ENCODE measurements at regions of chr3 and their contacts with region 1.

Region 1: GRCh38 chr3:98522244-98523090 is at the start of gene CLDND1:
- DNase-seq: peak; percentile 90 to 97 (median 94)
- ATAC-seq: peak; percentile 96
- H3K4me3 ChIP-seq: peak within 1 kb of the TSS; percentile 68
- H3K4me3 Mint-ChIP-seq: peak within 1 kb of the TSS; percentile 95
- H3K27ac ChIP-seq: peak within 1 kb of the TSS; percentile 66 to 84
- H3K27ac Mint-ChIP-seq: peak within 1 kb of the TSS; percentile 79
- H3K4me1 ChIP-seq: peaks cover 23% of the 10 kb centered on the region
- H3K4me1 Mint-ChIP-seq: peaks cover 55% of the 10 kb centered on the region
- H3K27me3 ChIP-seq: no peaks in the 10 kb centered on the region
- H3K27me3 Mint-ChIP-seq: no peaks in the 10 kb centered on the region
- CTCF ChIP-seq: no peak
- total RNA-seq, gene CLDND1: 168 to 185 TPM

Region 2: GRCh38 chr3:97971677-97972567 is 550.5 kb before region 1 on chr3 and contains the start of gene RIOX2:
- CTCF ChIA-PET with region 1: no interaction called
- POLR2A ChIA-PET with region 1: no interaction called
- intact Hi-C with region 1: loop called in 1 of 2 experiments (anchors 10 kb)
- DNase-seq: peak; percentile 52 to 91 (median 72)
- ATAC-seq: peak; percentile 93
- H3K4me3 ChIP-seq: peak within 1 kb of the TSS; percentile 63
- H3K4me3 Mint-ChIP-seq: peak within 1 kb of the TSS; percentile 91
- H3K27ac ChIP-seq: peak within 1 kb of the TSS in 1 of 2 donors; percentile 37
- H3K27ac Mint-ChIP-seq: peak within 1 kb of the TSS; percentile 91
- H3K4me1 ChIP-seq: peaks cover 34% of the 10 kb centered on the region
- H3K4me1 Mint-ChIP-seq: peaks cover 72% of the 10 kb centered on the region
- H3K27me3 ChIP-seq: no peaks in the 10 kb centered on the region
- H3K27me3 Mint-ChIP-seq: no peaks in the 10 kb centered on the region
- CTCF ChIP-seq: no peak
- total RNA-seq, gene RIOX2: 13.1 to 13.5 TPM

Region 3: DNA sequence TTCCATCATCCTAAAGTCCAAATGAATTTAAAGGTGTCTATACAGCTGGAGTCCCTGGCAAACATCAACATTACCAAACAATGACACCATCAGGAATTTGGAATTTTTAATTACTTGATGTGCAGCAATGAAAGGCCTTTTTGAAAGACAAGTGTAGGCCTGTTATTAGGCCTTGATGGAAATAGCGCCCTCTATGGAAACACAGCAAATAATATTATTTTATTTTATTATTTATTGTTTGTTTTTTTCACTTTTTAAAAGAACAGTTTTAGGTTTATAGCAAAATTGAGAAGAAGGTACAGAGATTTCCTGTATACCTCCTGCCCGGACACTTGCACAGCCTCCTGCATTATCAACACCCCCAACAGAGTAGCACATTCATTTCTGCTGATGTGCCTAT is 453.6 kb before region 1 on chr3:
- CTCF ChIA-PET with region 1: no interaction called
- POLR2A ChIA-PET with region 1: no interaction called
- intact Hi-C with region 1: no loop called
- DNase-seq: no peak
- ATAC-seq: no peak
- H3K4me3 ChIP-seq: no peak overlapping the region
- H3K4me3 Mint-ChIP-seq: no peak overlapping the region
- H3K27ac ChIP-seq: no peak overlapping the region
- H3K27ac Mint-ChIP-seq: no peak overlapping the region
- H3K4me1 ChIP-seq: no peaks in the 10 kb centered on the region
- H3K4me1 Mint-ChIP-seq: no peaks in the 10 kb centered on the region
- H3K27me3 ChIP-seq: peaks cover 0 to 4% of the 10 kb centered on the region in 2 experiments
- H3K27me3 Mint-ChIP-seq: peaks cover 25% of the 10 kb centered on the region
- CTCF ChIP-seq: no peak

Region 4: DNA sequence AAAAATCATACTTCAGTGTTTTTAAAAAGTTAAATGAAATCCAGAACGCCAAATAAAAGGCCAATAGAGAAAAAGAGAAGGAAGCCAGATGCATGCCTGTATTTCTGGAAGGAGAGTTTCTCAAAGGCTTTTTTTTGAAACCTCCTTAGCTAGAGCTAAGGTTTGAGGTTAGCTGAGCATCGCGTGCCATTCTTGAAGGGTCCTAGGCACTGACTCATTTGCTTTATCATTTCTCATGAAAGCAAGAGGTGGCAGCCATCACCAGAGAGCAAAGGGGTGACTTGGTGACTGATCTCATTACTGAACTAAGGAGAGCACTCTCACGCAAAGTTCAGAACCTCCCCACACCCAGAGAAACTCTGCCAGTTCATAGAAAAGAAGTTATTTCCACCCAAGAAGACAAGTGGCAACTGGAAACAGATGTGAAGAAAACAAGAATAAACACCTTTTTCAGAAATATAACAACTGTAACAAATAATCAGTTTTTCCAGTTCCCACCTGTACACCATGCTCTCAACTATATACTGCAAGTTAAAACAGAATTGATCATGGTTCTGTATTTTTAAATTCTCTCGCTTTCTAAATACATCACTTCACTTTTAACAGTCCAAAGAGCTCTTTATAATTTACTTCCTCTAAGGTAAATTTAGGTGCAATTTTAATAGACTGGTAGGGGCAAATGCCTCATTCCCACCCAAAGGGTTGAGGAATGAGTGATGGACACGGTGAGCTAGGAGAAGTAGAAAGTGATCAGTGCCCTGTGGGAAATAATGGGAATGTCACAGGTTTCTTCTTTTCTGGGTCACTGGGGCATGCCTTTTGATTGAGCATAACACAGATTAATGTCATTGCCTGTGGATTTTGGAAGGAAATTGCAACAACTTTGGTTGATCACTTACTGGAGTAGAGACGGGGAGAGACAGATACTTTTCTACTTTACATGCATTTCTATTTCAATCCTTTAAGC is 34.0 kb after region 1 on chr3:
- CTCF ChIA-PET with region 1: interaction called, 3 read pairs
- POLR2A ChIA-PET with region 1: interaction called, 169 read pairs
- intact Hi-C with region 1: no loop called
- DNase-seq: peak in 13 of 14 experiments; percentile 29 to 93 (median 49)
- ATAC-seq: peak; percentile 84
- H3K4me3 ChIP-seq: peak overlapping the region; percentile 32
- H3K4me3 Mint-ChIP-seq: peak overlapping the region; percentile 65
- H3K27ac ChIP-seq: peak overlapping the region; percentile 54 to 61
- H3K27ac Mint-ChIP-seq: peak overlapping the region; percentile 92
- H3K4me1 ChIP-seq: peaks cover 37% of the 10 kb centered on the region
- H3K4me1 Mint-ChIP-seq: peaks cover 75% of the 10 kb centered on the region
- H3K27me3 ChIP-seq: no peaks in the 10 kb centered on the region
- H3K27me3 Mint-ChIP-seq: no peaks in the 10 kb centered on the region
- CTCF ChIP-seq: no peak

Region 5: DNA sequence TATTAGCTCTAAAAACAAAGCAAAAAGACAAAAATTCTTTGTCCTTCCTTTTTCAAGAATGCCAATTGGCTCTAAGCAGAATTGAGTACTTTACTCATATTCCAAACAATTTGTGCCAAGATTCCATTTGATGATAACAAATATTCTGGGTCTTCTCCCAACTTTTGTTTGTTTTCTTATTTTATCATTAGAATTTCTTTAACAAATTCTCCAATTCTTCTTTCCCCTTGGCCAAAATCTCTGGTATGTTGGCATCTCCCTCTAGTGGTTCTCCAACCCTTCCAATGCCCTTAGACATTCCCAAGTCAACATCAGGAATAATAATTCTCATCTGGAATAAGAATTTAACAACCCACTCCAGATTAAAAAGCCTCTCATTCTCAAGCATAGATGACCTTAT is 65.6 kb after region 1 on chr3:
- CTCF ChIA-PET with region 1: interaction called, 3 read pairs
- POLR2A ChIA-PET with region 1: interaction called, 67 read pairs
- intact Hi-C with region 1: loop called (anchors 2 kb)
- DNase-seq: no peak
- ATAC-seq: no peak
- H3K4me3 ChIP-seq: no peak overlapping the region
- H3K4me3 Mint-ChIP-seq: no peak overlapping the region
- H3K27ac ChIP-seq: no peak overlapping the region
- H3K27ac Mint-ChIP-seq: no peak overlapping the region
- H3K4me1 ChIP-seq: peaks cover 13% of the 10 kb centered on the region
- H3K4me1 Mint-ChIP-seq: peaks cover 37% of the 10 kb centered on the region
- H3K27me3 ChIP-seq: no peaks in the 10 kb centered on the region
- H3K27me3 Mint-ChIP-seq: no peaks in the 10 kb centered on the region
- CTCF ChIP-seq: no peak

Region 6: GRCh38 chr3:99817437-99818240 is 1295.2 kb after region 1 on chr3 and contains the start of gene CMSS1:
- CTCF ChIA-PET with region 1: no interaction called
- POLR2A ChIA-PET with region 1: interaction called, 3 read pairs
- intact Hi-C with region 1: loop called (anchors 5 kb)
- DNase-seq: peak; percentile 90 to 98 (median 96)
- ATAC-seq: peak; percentile 80
- H3K4me3 ChIP-seq: peak within 1 kb of the TSS; percentile 71
- H3K4me3 Mint-ChIP-seq: peak within 1 kb of the TSS; percentile 97
- H3K27ac ChIP-seq: peak within 1 kb of the TSS; percentile 76 to 86
- H3K27ac Mint-ChIP-seq: peak within 1 kb of the TSS; percentile 100
- H3K4me1 ChIP-seq: peaks cover 15% of the 10 kb centered on the region
- H3K4me1 Mint-ChIP-seq: peaks cover 48% of the 10 kb centered on the region
- H3K27me3 ChIP-seq: no peaks in the 10 kb centered on the region
- H3K27me3 Mint-ChIP-seq: no peaks in the 10 kb centered on the region
- CTCF ChIP-seq: no peak
- total RNA-seq, gene CMSS1: 12.2 TPM